Posterior vena cava (tissue), 2 donors: ENCODE measurements at regions of chr5 and their contacts with region 1.

Region 1: DNA sequence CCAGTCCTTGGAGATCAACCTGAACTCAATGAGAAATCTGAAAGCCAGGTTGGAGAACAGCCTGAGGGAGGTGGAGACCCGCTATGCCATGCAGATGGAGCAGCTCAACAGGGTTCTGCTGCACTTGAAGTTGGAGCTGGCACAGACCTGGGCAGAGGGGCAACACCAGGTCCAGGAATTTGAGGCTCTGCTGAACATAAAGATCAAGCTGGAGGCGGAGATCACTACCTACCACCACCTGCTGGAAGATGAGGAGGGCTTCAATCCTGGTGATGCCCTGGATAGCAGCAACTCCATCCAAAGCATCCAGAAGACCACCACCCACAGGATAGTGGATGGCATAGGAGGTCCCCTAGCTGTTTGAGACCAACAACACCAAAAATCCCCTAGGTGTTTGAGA is 30.5 kb upstream of the SPZ1 start:
- DNase-seq: no peak

Region 2: GRCh38 chr5:80318212-80318611 is 28.9 kb after region 1 on chr5:
- intact Hi-C with region 1: loop called in 1 of 2 experiments (anchors 1 kb)
- DNase-seq: no peak

Region 3: GRCh38 chr5:80941551-80941950 is 652.2 kb after region 1 on chr5:
- intact Hi-C with region 1: no loop called
- DNase-seq: no peak